IMR-90 (cell line): ENCODE measurements at regions of chr12 and their contacts with region 1.

Region 1: GRCh38 chr12:75489613-75490210 is 9.2 kb downstream of the GLIPR1 start:
- DNase-seq: peak; percentile 63
- ATAC-seq: peak; percentile 31
- H3K4me3 ChIP-seq: no peak overlapping the region
- H3K27ac ChIP-seq: peak overlapping the region; percentile 13; the same call in 1 of the 2 replicates
- H3K4me1 ChIP-seq: peaks cover 7% of the 10 kb centered on the region
- H3K27me3 ChIP-seq: no peaks in the 10 kb centered on the region
- CTCF ChIP-seq: no peak
- POLR2A ChIP-seq: no peak
- RAD21 ChIP-seq: no peak

Region 2: GRCh38 chr12:75260312-75260711 is 229.4 kb before region 1 on chr12:
- CTCF ChIA-PET with region 1: no interaction called
- POLR2A ChIA-PET with region 1: no interaction called
- dilution Hi-C with region 1: no loop called
- in situ Hi-C with region 1: no loop called
- intact Hi-C with region 1: no loop called
- DNase-seq: no peak
- ATAC-seq: no peak
- H3K4me3 ChIP-seq: no peak overlapping the region
- H3K27ac ChIP-seq: no peak overlapping the region
- H3K4me1 ChIP-seq: no peaks in the 10 kb centered on the region
- H3K27me3 ChIP-seq: no peaks in the 10 kb centered on the region
- CTCF ChIP-seq: no peak
- POLR2A ChIP-seq: no peak
- RAD21 ChIP-seq: no peak

Region 3: GRCh38 chr12:75341832-75342231 is 147.9 kb before region 1 on chr12:
- CTCF ChIA-PET with region 1: no interaction called
- POLR2A ChIA-PET with region 1: no interaction called
- dilution Hi-C with region 1: no loop called
- in situ Hi-C with region 1: no loop called
- intact Hi-C with region 1: no loop called
- DNase-seq: peak; percentile 4
- ATAC-seq: no peak
- H3K4me3 ChIP-seq: no peak overlapping the region
- H3K27ac ChIP-seq: no peak overlapping the region
- H3K4me1 ChIP-seq: no peaks in the 10 kb centered on the region
- H3K27me3 ChIP-seq: no peaks in the 10 kb centered on the region; the same call in 1 of the 2 replicates
- CTCF ChIP-seq: no peak
- POLR2A ChIP-seq: no peak
- RAD21 ChIP-seq: no peak

Region 4: DNA sequence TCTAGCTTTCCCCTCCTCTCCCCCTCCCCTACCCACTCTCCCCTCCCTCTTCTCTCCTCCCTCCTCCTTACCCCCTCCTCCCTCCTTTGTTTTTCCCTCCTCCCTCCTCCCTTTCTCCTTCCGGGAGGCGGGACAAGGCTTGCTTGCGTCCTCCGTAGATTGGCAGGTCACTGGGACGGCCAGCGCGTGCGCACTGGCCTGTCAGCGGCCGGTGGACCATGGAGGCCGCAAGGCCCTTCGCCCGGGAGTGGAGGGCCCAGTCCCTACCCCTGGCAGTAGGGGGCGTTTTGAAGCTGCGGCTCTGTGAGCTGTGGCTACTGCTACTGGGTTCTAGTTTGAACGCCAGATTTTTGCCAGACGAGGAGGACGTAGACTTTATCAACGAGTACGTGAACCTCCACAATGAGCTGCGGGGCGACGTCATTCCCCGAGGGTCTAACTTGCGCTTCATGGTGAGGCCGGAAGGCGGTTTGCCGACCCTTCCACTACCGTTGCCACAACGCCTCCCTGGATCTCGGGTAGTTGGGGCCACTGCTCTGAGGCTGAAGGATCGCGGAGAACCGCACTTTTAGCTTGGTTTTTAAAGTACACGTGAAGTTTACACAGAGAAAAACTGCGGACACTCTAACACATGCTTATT is 98.7 kb before region 1 on chr12 and contains the start of gene GLIPR1L2:
- CTCF ChIA-PET with region 1: interaction called, 7 read pairs
- POLR2A ChIA-PET with region 1: no interaction called
- dilution Hi-C with region 1: no loop called
- in situ Hi-C with region 1: loop called (anchors 10 kb)
- intact Hi-C with region 1: loop called (anchors 2 kb)
- DNase-seq: peak; percentile 97
- ATAC-seq: peak; percentile 99
- H3K4me3 ChIP-seq: peak within 1 kb of the TSS; percentile 51
- H3K27ac ChIP-seq: peak within 1 kb of the TSS; percentile 81
- H3K4me1 ChIP-seq: 0 out of 2 replicates have a peak, but pooled peaks cover 2% of the 10 kb centered on the region
- H3K27me3 ChIP-seq: no peaks in the 10 kb centered on the region
- CTCF ChIP-seq: peak; percentile 91
- POLR2A ChIP-seq: no peak
- RAD21 ChIP-seq: peak; percentile 66
- total RNA-seq, gene GLIPR1L2: not detected in 2 replicates

Region 5: GRCh38 chr12:75542942-75543341 is 53.2 kb after region 1 on chr12:
- CTCF ChIA-PET with region 1: no interaction called
- POLR2A ChIA-PET with region 1: no interaction called
- dilution Hi-C with region 1: no loop called
- in situ Hi-C with region 1: no loop called
- intact Hi-C with region 1: no loop called
- DNase-seq: peak; percentile 71
- ATAC-seq: peak; percentile 48
- H3K4me3 ChIP-seq: no peak overlapping the region
- H3K27ac ChIP-seq: no peak overlapping the region
- H3K4me1 ChIP-seq: no peaks in the 10 kb centered on the region
- H3K27me3 ChIP-seq: no peaks in the 10 kb centered on the region
- CTCF ChIP-seq: no peak
- POLR2A ChIP-seq: no peak
- RAD21 ChIP-seq: no peak